A549 (cell line): ENCODE measurements at regions of chr2 and their contacts with region 1.

Region 1: DNA sequence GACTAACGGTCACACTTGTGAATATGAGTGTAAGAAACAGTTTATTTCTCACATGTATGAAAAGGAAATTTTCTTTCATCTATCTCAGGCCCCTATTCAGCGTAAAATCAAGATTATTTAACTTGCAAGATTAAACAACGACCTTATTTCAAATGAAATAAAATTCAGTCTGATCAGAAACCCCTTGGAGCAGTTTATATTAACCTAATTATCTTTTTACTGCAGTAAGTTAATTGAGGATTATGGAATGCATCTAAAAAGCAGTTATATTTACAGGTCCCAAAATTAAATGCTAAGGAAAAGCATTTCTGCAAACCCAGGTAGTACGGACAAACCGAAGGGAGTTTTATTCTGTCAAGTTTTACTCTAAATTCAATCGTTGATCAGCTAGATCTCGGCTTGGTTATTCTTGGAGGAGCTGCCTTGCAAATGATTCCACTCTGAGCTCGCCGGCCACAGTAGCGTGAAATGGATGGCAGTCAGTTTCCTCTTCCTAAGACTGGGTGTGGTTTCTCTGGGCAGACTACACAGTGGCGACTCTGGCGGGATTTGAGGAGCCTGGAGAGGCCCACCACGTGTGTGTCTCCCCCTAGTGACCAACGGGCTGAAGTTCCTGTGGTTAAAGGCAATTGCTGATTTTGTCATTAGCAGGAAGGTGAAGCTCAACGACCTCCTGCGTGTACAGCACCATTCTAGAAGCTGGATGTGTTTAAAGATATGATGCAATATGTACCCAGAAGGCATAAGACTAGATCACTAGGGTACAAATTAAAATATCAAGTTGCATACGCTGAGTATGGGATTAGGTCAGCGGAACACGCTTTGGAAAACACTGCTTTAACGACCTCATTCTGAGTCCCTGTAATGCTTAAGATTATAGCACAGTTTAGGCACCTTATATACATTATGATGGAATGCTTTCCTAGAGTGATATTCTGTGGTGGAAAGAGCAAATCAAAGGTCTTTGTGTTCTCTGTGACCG is 36.4 kb downstream of the PRKRA start:
- DNase-seq: peak; percentile 76 to 96
- ATAC-seq: peak; percentile 89 to 95
- H3K4me3 ChIP-seq: peak overlapping the region; percentile 48
- H3K27ac ChIP-seq: peak overlapping the region; percentile 93 to 95
- H3K4me1 ChIP-seq: peaks cover 14% of the 10 kb centered on the region
- CTCF ChIP-seq: peak; percentile 89
- EP300 ChIP-seq: no peak
- POLR2A ChIP-seq: peak; percentile 47
- RAD21 ChIP-seq: peak; percentile 75 to 78

Region 2: GRCh38 chr2:178128836-178129630 is 285.5 kb before region 1 on chr2:
- CTCF ChIA-PET with region 1: interaction called, 60 read pairs
- POLR2A ChIA-PET with region 1: interaction called, 3 read pairs
- DNase-seq: no peak
- ATAC-seq: no peak
- H3K4me3 ChIP-seq: no peak overlapping the region
- H3K27ac ChIP-seq: no peak overlapping the region
- H3K4me1 ChIP-seq: no peaks in the 10 kb centered on the region
- CTCF ChIP-seq: no peak
- EP300 ChIP-seq: no peak
- POLR2A ChIP-seq: no peak
- RAD21 ChIP-seq: no peak

Region 3: GRCh38 chr2:178397002-178397605 is 17.5 kb before region 1 on chr2:
- CTCF ChIA-PET with region 1: interaction called, 138 read pairs
- POLR2A ChIA-PET with region 1: no interaction called
- DNase-seq: peak; percentile 15 to 47
- ATAC-seq: peak; percentile 90 to 93; a peak in 5 of 6 replicates
- H3K4me3 ChIP-seq: no peak overlapping the region
- H3K27ac ChIP-seq: no peak overlapping the region
- H3K4me1 ChIP-seq: no peaks in the 10 kb centered on the region
- CTCF ChIP-seq: peak; percentile 79
- EP300 ChIP-seq: no peak
- POLR2A ChIP-seq: no peak
- RAD21 ChIP-seq: peak; percentile 39 to 44

Region 4: DNA sequence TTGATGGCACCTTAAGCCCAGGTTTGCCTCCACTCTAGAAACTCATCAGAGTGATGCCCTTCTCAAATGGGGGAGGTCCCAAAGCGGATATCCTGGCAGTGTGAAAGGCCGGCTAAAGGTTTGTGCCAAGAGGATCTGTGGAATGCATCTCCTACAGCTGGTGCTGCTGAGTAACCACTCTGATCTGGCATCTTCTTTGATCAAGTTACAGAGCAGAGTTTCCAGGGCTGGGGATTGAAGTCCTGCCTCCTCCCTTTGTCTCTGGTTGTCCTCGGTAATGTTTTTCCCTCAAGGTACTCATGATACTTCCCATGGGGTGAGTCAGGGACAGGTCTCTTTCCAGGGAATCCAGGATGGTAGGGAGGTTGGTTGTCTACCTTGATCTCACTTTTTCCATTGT is 11.8 kb after region 1 on chr2:
- CTCF ChIA-PET with region 1: interaction called, 52 read pairs
- POLR2A ChIA-PET with region 1: no interaction called
- DNase-seq: no peak
- ATAC-seq: no peak
- H3K4me3 ChIP-seq: no peak overlapping the region
- H3K27ac ChIP-seq: no peak overlapping the region
- H3K4me1 ChIP-seq: no peaks in the 10 kb centered on the region
- CTCF ChIP-seq: no peak
- EP300 ChIP-seq: no peak
- POLR2A ChIP-seq: no peak
- RAD21 ChIP-seq: no peak

Region 5: DNA sequence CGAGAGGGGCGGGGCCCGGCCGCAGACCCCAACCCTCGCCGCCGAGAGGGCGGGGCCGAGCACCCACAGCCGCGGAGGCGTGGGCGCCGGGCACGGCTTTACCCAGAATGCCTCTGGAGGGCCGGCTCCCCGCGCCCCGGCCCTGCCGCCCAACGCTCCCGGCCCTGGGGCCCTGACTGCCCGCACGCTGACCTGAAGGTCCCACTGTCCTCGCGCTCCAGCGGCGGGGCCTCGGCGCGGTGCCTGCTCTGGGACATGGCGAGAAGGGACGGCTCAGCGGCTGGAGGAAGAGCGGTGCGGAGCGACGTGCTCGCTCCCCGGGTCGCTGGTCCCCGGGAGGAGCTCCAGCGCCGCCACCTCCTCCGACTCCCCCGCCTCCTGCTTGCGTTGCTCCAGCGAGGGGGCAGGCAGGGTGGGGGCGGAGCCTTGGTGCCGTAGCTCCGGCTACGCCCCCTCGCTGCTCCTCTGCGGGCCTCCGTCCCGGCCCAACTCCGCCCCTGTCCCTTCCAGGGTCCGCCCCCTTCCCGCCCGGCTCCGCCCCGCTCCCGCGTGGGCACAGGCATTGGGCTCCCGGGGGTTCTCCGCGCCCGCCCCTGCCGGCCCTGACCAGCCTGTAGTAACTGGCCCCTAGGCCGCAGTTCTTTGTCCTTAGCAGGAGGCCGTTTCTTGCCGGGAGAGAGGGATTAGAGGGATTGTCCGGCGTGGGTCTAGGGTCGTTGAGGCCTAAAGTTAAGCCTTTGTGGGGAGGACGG is 36.4 kb after region 1 on chr2 and contains the starts of genes PJVK and PRKRA:
- CTCF ChIA-PET with region 1: interaction called, 11 read pairs
- POLR2A ChIA-PET with region 1: interaction called, 19 read pairs
- DNase-seq: peak; percentile 72 to 98
- ATAC-seq: peak; percentile 90 to 97
- H3K4me3 ChIP-seq: peak within 1 kb of the TSS; percentile 61
- H3K27ac ChIP-seq: peak within 1 kb of the TSS; percentile 92 to 97
- H3K4me1 ChIP-seq: peaks cover 11% of the 10 kb centered on the region; the same call in 2 of the 3 replicates
- CTCF ChIP-seq: no peak
- EP300 ChIP-seq: no peak
- POLR2A ChIP-seq: peak; percentile 94
- RAD21 ChIP-seq: no peak
- polyA plus RNA-seq, gene PJVK: 7.9 and 10.1 TPM in 2 replicates
- polyA plus RNA-seq, gene PRKRA: 56.7 and 63.4 TPM in 2 replicates